ENCODE measurements at regions of chr6 and their contacts with region 1.

Region 1: GRCh38 chr6:135535989-135536414 is 38.5 kb upstream of the AHI1 start:
- DNase-seq: no peak
- ATAC-seq: no peak

Region 2: DNA sequence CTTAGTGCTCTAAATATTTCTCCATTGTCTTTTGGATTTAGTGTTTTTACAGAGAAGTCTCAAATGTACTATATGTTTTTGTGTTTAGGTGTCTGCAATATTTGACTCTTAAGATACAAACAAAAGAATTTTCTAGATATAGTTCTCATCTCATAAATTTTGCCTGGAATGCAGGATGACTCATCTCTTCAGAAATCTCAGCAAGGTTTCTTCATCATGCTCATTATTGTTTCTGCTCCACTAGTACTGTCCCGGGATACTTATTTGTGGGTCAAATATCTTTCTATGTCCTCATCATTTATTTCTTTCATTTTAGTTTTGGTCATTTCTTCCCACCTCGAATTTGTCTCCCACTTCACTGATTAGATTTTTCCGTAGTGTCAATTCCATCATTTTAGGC is 48.0 kb before region 1 on chr6:
- intact Hi-C with region 1: no loop called
- DNase-seq: no peak
- ATAC-seq: no peak

Region 3: GRCh38 chr6:136031982-136032381 is 496.0 kb after region 1 on chr6:
- intact Hi-C with region 1: loop called (anchors 10 kb)
- DNase-seq: no peak
- ATAC-seq: peak; percentile 73

Region 4: DNA sequence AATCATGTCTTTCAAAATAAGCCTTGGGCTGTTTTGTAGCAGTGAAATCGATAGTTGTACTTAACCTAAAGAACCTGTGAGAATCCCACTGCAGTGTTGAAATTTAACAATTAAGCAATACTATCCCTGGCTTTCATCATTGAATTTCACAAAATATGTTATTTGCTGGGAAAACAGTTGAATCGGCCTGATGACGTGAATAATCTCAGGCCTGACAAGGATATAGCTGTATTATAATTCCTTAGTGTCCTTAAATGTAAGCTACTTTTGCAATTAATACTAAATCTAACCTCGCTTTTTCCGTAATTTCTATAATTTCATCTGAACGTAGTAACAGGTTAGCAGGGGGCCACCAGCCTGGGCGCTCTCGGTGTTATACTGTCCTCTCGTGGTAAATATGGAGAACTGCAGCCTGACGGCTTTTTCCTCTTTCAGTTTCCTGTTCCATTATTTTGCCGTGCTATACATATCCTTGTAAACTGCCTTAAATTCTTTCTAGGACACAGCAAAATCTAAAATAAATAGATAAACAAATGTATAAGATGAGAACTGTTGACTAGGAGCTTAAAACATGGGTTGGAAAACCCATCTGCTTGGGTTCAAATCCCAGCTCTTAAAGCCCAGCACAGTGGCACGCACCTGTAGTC is 690.1 kb after region 1 on chr6:
- intact Hi-C with region 1: loop called (anchors 5 kb)
- DNase-seq: peak; percentile 52
- ATAC-seq: peak; percentile 88

Measured in left ventricle myocardium superior (tissue), 1 donor.